ENCODE measurements at regions of chr12 and their contacts with region 1.

Region 1: GRCh38 chr12:54749191-54749818 is 101.1 kb upstream of the DCD start:
- DNase-seq: peak; percentile 46
- ATAC-seq: peak; percentile 71
- H3K4me3 Mint-ChIP-seq: no peak overlapping the region
- H3K27ac Mint-ChIP-seq: no peak overlapping the region
- H3K4me1 Mint-ChIP-seq: peaks cover 18% of the 10 kb centered on the region
- H3K27me3 Mint-ChIP-seq: peaks cover 2% of the 10 kb centered on the region

Region 2: GRCh38 chr12:54588110-54588889 is 161.0 kb before region 1 on chr12 and contains the start of gene PPP1R1A:
- CTCF ChIA-PET with region 1: no interaction called
- POLR2A ChIA-PET with region 1: no interaction called
- intact Hi-C with region 1: no loop called
- DNase-seq: peak; percentile 22
- ATAC-seq: peak; percentile 20
- H3K4me3 Mint-ChIP-seq: peak within 1 kb of the TSS; percentile 40
- H3K27ac Mint-ChIP-seq: no peak within 1 kb of the TSS
- H3K4me1 Mint-ChIP-seq: peaks cover 7% of the 10 kb centered on the region
- H3K27me3 Mint-ChIP-seq: peaks cover 43% of the 10 kb centered on the region
- total RNA-seq, gene PPP1R1A: not detected

Region 3: GRCh38 chr12:54701940-54702592 is 47.2 kb before region 1 on chr12:
- CTCF ChIA-PET with region 1: interaction called, 23 read pairs
- POLR2A ChIA-PET with region 1: no interaction called
- intact Hi-C with region 1: loop called in 1 of 2 experiments (anchors 1 kb)
- DNase-seq: no peak
- ATAC-seq: peak; percentile 58
- H3K4me3 Mint-ChIP-seq: no peak overlapping the region
- H3K27ac Mint-ChIP-seq: no peak overlapping the region
- H3K4me1 Mint-ChIP-seq: no peaks in the 10 kb centered on the region
- H3K27me3 Mint-ChIP-seq: no peaks in the 10 kb centered on the region

Region 4: GRCh38 chr12:54759751-54760150 is 10.4 kb after region 1 on chr12:
- CTCF ChIA-PET with region 1: interaction called, 23 read pairs
- POLR2A ChIA-PET with region 1: no interaction called
- intact Hi-C with region 1: no loop called
- DNase-seq: peak; percentile 22
- ATAC-seq: no peak
- H3K4me3 Mint-ChIP-seq: no peak overlapping the region
- H3K27ac Mint-ChIP-seq: no peak overlapping the region
- H3K4me1 Mint-ChIP-seq: peaks cover 8% of the 10 kb centered on the region
- H3K27me3 Mint-ChIP-seq: peaks cover 7% of the 10 kb centered on the region

Region 5: DNA sequence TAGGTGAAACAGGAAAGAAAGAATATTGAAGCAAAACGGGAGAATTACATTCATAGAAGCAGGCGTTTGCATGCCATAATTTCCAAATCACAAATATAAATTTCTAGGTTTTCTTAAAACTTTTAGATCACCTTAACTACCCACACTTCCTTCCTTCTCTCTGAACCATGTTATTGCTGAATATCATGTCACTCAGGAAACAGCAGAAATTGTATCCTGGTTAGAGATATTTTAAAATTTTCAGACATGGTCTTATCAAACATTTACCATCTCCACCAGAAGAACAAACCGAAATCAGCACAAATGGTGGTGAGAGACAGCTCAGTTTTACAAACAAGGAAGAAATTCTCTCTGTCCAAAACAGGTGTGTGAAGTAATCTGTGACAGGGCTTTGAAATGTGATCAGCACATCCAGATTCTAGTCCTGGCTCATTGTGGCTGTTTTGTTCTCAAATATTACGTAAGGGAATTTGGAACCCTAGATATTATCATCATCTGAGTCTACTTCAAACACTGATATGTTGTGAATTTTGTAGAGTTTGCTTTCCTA is 219.0 kb after region 1 on chr12:
- CTCF ChIA-PET with region 1: interaction called, 25 read pairs
- POLR2A ChIA-PET with region 1: no interaction called
- intact Hi-C with region 1: no loop called
- DNase-seq: no peak
- ATAC-seq: no peak
- H3K4me3 Mint-ChIP-seq: no peak overlapping the region
- H3K27ac Mint-ChIP-seq: peak overlapping the region; percentile 58
- H3K4me1 Mint-ChIP-seq: peaks cover 60% of the 10 kb centered on the region
- H3K27me3 Mint-ChIP-seq: no peaks in the 10 kb centered on the region

Region 6: DNA sequence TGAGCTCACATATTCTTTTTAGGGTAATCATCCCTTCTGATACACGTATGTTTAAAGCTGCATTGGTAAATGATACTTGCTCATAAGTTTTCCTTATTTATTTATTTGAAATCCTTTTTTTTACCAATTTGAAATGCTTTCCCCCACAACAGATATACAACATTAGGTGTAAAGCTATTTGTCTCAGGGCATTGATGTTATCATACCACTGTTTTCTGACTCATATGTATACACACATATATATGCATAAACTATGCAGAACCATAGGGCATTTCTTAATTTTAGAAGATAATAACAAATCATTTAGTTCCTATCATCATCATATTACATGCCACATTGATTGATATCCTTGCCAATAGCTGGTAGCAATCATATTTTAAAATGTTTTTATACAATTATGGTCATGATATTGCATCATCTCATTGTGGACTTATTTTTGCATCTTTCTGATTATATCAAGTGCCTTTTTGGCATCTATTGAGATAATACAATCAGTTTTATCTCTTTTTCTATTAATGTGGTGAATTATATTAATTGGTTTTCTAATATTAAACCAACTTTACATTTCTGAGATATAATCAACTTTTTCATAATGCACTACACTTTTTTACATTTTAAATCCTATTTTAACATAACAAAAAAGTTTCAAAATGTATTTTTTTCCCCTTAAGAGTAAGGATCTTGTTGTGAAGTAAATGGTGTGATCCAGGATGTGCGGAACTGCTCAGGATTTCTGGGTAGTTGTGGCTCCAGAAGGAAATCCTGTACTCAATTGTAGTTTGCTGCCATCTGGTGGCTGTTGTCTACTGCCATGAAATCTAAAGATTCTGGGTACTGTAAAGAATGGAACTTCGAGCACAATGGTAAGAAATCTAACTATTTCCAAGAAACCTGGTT is 393.6 kb after region 1 on chr12:
- CTCF ChIA-PET with region 1: interaction called, 7 read pairs
- POLR2A ChIA-PET with region 1: no interaction called
- intact Hi-C with region 1: loop called (anchors 2 kb)
- DNase-seq: peak; percentile 66
- ATAC-seq: no peak
- H3K4me3 Mint-ChIP-seq: no peak overlapping the region
- H3K27ac Mint-ChIP-seq: no peak overlapping the region
- H3K4me1 Mint-ChIP-seq: peaks cover 4% of the 10 kb centered on the region
- H3K27me3 Mint-ChIP-seq: peaks cover 9% of the 10 kb centered on the region

Measured in activated CD4-positive, alpha-beta T cell treated with anti-CD3 and anti-CD28 coated beads for 36 hours (primary cell).